GM10248 (cell line): ENCODE measurements at regions of chr6 and their contacts with region 1.

Region 1: DNA sequence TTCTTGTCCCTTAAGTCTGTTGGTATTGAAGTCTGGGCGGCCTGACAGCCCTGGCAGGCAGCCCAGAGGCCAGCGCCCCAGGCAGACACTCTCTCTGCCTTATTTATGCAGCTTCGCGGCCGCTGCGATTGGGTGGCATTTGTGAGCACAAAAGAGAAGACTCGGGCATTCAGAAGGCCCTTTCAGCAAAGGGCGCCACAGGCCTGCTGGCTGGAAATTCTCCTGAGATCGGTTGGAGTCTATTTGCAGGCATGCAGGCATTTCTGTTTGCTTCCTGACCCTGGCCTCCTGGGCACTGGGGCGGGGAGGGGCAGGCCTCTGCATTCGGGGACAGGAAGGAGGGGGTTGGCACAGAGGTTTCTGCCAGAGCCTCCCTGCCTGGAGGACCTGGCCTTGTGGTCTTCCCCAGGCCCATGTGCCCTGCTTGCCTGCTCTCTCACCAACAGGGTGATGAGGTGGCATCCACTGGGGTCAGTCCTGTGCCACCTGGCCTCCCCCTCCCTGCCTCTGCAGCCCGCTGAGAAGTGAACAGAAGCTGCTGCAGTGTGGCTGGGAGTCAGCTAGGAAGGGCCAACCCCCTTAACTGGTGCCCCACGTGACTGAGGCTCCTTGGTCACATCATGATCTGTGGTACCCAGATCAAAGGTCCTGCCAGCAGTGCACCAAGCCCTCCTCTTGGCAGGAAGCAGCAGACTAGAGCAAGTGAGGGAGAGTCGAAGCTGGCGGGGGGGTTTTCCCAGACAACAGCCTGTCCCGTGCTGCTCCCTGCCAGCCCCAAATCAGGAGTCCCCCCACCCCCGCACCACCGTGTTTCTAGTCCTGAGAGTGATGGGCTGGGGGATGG is 16.6 kb upstream of the CCDC167 start:
- DNase-seq: peak; percentile 84
- CTCF ChIP-seq: no peak

Region 2: GRCh38 chr6:37369321-37370201 is 146.7 kb before region 1 on chr6:
- CTCF ChIA-PET with region 1: no interaction called
- POLR2A ChIA-PET with region 1: no interaction called
- DNase-seq: no peak
- CTCF ChIP-seq: no peak

Region 3: DNA sequence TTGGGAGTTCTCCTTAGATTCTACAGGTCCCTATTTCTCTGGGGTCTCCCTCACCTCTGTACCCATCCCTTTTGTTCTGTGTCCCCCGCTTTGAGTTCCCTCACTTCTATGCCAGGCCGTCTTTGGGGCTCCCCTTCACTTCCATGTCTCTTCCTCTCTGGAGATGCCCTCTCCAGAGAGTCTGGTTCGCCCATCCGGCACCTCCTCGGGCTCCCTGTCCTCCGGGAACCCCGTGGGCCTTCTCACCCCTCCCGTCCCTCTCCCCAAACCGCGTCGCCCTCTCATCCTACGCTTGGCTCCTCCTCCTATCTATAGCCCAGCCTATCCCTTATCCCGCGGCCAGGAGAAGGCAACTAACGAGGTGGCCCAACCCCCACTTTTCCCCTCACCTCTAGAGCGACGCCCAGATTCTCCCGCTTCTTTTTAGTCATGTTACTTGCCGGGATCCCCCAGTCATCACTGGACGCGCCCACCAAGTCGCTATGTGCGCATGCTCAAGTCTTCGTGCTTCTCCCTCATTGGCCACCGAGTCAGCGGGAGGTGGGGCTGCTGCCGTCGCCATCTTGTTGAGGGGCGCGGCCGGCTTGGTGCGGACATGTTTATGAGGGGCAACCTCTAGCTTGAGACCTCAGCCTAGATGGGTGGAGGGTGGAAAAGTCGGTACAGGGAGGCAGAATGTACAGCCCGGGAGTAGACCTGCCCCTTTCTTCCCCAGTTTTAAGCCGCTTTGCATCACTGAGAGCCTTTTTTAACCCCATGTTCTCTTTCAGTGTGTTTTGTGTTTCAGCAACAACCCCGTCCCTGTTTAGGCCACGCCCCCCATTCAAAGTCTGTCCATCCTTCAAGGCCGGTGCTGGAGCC is 16.6 kb before region 1 on chr6 and contains the start of gene CCDC167:
- CTCF ChIA-PET with region 1: interaction called, 33 read pairs
- POLR2A ChIA-PET with region 1: no interaction called
- DNase-seq: peak; percentile 95
- CTCF ChIP-seq: no peak